Heart left ventricle (tissue), 16 donors: ENCODE measurements at regions of chr9 and their contacts with region 1.

Region 1: GRCh38 chr9:118829334-118829733 is 539.9 kb downstream of the BRINP1 start:
- DNase-seq: no peak
- ATAC-seq: peak in 1 of 4 donors; percentile 36
- H3K4me3 ChIP-seq: no peak overlapping the region
- H3K27ac ChIP-seq: no peak overlapping the region
- H3K4me1 ChIP-seq: no peaks in the 10 kb centered on the region
- H3K27me3 ChIP-seq: no peaks in the 10 kb centered on the region
- CTCF ChIP-seq: peak; percentile 14 to 75 (median 52)
- POLR2A ChIP-seq: no peak

Region 2: DNA sequence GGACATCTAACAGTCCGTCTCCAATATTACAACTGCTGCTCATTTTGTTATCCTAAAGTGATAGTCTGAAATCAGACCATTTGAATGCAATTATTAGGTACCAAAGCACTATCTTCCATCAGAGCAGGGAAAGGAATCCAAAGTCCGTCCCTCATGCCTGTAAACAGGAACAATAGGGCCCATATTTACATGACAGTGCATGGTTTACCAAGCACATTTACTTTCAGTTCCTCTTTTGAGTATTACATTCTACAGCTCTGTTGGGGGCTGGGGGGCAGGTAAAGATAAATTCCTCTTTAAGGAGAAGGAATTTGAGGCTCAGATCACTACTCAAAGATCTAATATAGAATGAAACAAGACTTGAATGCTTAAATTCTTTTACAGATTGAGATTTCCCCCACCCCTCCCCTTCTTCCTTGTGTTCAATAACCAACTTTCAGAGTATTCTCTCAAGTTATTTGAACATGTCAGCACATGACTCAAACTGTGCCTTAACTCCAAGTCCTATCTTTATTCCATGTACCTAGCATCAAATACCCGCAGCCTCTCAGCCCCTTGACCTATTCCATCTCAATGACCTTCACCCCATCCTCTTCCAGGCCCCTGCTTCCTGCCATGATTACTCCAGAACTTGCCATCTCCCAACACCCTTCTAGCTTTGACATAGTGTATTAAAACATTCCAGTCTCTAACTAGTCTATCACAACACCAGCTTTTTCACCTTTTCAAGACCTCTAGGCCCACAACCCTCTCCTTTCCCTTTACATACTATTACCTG is 468.9 kb after region 1 on chr9:
- intact Hi-C with region 1: loop called in 3 of 10 experiments (anchors 2 to 5 kb)
- DNase-seq: no peak
- ATAC-seq: no peak
- H3K4me3 ChIP-seq: no peak overlapping the region
- H3K27ac ChIP-seq: no peak overlapping the region
- H3K4me1 ChIP-seq: no peaks in the 10 kb centered on the region
- H3K27me3 ChIP-seq: no peaks in the 10 kb centered on the region
- CTCF ChIP-seq: no peak
- POLR2A ChIP-seq: no peak

Region 3: DNA sequence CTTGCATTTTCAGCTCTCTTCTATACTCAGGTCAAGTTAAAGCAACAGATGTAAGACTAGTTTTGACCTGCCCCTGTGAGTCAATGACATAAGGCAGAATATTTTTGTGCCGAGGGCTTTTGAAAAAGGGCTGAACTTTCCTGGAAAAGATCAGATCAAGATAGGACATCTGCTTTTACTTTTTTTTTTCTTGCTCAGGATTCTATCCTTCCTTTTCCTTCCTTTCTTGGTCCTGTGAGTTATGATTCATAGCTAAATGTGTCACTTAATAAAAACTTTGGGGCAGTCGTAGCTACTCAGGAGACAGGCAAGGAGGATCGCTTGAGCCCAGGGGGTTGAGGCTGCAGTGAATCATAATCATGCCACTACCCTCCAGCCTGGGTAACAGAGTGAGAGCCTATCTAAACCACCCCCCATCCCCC is 624.2 kb after region 1 on chr9:
- intact Hi-C with region 1: no loop called
- DNase-seq: no peak
- ATAC-seq: no peak
- H3K4me3 ChIP-seq: no peak overlapping the region
- H3K27ac ChIP-seq: no peak overlapping the region
- H3K4me1 ChIP-seq: no peaks in the 10 kb centered on the region
- H3K27me3 ChIP-seq: no peaks in the 10 kb centered on the region
- CTCF ChIP-seq: no peak
- POLR2A ChIP-seq: no peak